CD4-positive, alpha-beta T cell (primary cell): ENCODE measurements at regions of chr10 and their contacts with region 1.

Region 1: DNA sequence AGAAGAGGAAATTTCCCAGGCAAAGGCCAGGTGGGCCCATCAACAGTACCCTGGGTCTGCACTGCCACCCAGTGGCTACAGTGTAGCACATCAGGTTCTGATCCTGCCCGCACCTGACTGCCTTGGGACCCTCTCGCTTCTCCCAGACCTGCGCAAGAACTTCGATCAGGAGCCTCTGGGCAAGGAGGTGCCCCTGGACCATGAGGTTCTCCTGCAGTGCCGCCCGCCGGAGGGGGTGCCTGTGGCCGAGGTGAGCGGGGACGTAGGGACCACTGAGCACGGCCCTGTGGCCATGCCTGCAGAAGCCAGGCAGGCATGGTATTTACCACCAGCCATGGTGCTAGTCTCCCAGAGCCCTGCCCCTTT is 33.9 kb upstream of the SLC29A3 start:
- DNase-seq: peak in 8 of 14 experiments; percentile 2 to 41 (median 12)
- ATAC-seq: peak; percentile 55
- H3K4me3 ChIP-seq: no peak overlapping the region
- H3K4me3 Mint-ChIP-seq: no peak overlapping the region
- H3K27ac ChIP-seq: no peak overlapping the region
- H3K27ac Mint-ChIP-seq: no peak overlapping the region
- H3K4me1 ChIP-seq: no peaks in the 10 kb centered on the region
- H3K4me1 Mint-ChIP-seq: no peaks in the 10 kb centered on the region
- H3K27me3 ChIP-seq: no peaks in the 10 kb centered on the region
- H3K27me3 Mint-ChIP-seq: no peaks in the 10 kb centered on the region
- CTCF ChIP-seq: peak; percentile 42

Region 2: GRCh38 chr10:70786799-70787415 is 498.3 kb before region 1 on chr10:
- CTCF ChIA-PET with region 1: no interaction called
- POLR2A ChIA-PET with region 1: no interaction called
- intact Hi-C with region 1: no loop called
- DNase-seq: peak in 1 of 14 experiments; percentile 5
- ATAC-seq: no peak
- H3K4me3 ChIP-seq: no peak overlapping the region
- H3K4me3 Mint-ChIP-seq: no peak overlapping the region
- H3K27ac ChIP-seq: no peak overlapping the region
- H3K27ac Mint-ChIP-seq: no peak overlapping the region
- H3K4me1 ChIP-seq: peaks cover 6% of the 10 kb centered on the region
- H3K4me1 Mint-ChIP-seq: no peaks in the 10 kb centered on the region
- H3K27me3 ChIP-seq: peaks cover 0 to 8% of the 10 kb centered on the region in 2 experiments
- H3K27me3 Mint-ChIP-seq: peaks cover 6% of the 10 kb centered on the region
- CTCF ChIP-seq: no peak

Region 3: GRCh38 chr10:70925377-70926225 is 359.6 kb before region 1 on chr10:
- CTCF ChIA-PET with region 1: no interaction called
- POLR2A ChIA-PET with region 1: no interaction called
- intact Hi-C with region 1: loop called in 1 of 2 experiments (anchors 10 kb)
- DNase-seq: peak; percentile 12 to 65 (median 37)
- ATAC-seq: peak; percentile 56
- H3K4me3 ChIP-seq: no peak overlapping the region
- H3K4me3 Mint-ChIP-seq: no peak overlapping the region
- H3K27ac ChIP-seq: no peak overlapping the region
- H3K27ac Mint-ChIP-seq: no peak overlapping the region
- H3K4me1 ChIP-seq: peaks cover 6% of the 10 kb centered on the region
- H3K4me1 Mint-ChIP-seq: no peaks in the 10 kb centered on the region
- H3K27me3 ChIP-seq: peaks cover 2 to 3% of the 10 kb centered on the region in 2 experiments
- H3K27me3 Mint-ChIP-seq: peaks cover 10% of the 10 kb centered on the region
- CTCF ChIP-seq: peak; percentile 82